Activated CD4-positive, alpha-beta memory T cell treated with anti-CD3 and anti-CD28 coated beads for 36 hours (primary cell): ENCODE measurements at regions of chr2 and their contacts with region 1.

Region 1: DNA sequence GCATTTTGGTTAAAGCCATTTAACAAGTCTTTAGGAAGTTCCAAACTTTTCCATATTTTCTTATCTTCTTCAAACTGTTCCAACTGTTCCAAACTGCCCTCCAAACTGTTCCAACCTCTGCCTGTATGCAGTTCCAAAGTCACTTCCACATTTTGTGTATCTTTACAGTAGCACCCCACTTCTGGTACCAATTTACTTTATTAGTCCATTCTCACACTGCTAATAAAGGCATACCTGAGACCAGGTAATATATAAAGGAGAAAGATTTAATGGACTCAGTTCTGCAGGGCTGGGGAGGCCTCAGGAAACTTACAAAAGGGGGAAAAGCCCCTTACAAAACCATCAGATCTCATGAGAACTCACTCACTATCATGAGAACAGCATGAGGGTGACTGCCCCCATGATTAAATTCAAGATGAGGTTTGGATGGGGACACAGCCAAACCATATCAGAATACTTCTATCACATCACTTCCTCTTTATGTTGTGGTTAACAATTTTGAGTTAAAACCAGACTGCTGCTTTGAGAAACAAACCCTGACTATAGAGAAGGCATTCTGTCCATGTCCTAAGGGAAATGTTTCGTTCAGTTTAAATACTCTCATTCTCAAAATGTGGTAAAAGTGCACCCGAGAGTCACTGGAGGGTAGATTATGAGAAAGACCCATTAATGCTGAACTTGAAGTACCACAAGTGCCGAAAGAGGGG is 11.0 kb downstream of the IL18R1 start:
- DNase-seq: peak; percentile 36
- H3K4me3 Mint-ChIP-seq: peak overlapping the region; percentile 31
- H3K27ac Mint-ChIP-seq: peak overlapping the region; percentile 87
- H3K4me1 Mint-ChIP-seq: peaks cover 68% of the 10 kb centered on the region
- H3K27me3 Mint-ChIP-seq: no peaks in the 10 kb centered on the region

Region 2: GRCh38 chr2:101704046-101704466 is 662.5 kb before region 1 on chr2:
- CTCF ChIA-PET with region 1: no interaction called
- POLR2A ChIA-PET with region 1: no interaction called
- intact Hi-C with region 1: loop called (anchors 10 kb)
- DNase-seq: peak; percentile 59
- H3K4me3 Mint-ChIP-seq: peak overlapping the region; percentile 62
- H3K27ac Mint-ChIP-seq: peak overlapping the region; percentile 87
- H3K4me1 Mint-ChIP-seq: peaks cover 74% of the 10 kb centered on the region
- H3K27me3 Mint-ChIP-seq: no peaks in the 10 kb centered on the region

Region 3: DNA sequence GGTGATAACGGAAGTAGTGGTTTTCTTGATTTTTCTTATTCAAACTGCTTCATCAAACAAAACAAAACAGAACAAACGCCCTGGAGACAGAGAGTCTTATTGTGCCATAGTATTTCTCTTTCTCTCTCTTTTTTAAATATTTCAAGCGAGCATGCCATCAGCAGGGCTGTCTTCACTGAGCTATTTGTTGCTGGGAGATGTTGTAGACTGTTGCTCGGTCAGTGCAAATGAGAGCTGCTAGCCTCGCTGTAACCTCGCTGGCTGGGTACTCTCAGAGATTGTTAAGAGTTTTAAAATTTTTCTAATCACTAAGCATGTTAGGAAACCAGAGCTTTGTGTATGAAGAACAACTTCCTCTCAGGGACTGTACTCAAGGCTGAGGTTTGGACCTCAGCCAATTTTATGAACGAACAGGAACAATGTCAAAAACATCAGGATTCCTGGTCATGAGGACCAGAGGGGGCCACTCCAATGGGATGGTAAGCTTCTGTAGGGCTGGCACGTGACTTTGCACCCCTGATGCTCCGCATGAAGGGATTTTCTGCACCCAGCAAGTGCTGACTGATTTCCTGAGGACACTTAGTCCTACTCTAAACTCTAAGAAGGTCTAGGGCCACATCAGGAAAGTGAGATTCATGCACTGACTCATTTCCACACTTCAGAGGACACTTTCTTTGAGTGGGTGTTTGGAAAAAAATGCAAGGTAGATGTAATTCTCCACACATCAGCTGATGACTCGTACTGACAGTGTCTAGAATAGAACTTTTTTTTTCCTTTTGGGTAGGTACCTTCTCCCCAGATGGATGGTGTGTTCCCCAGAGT is 283.8 kb before region 1 on chr2:
- CTCF ChIA-PET with region 1: no interaction called
- POLR2A ChIA-PET with region 1: no interaction called
- intact Hi-C with region 1: loop called (anchors 1 kb)
- DNase-seq: peak; percentile 80
- H3K4me3 Mint-ChIP-seq: peak overlapping the region; percentile 57
- H3K27ac Mint-ChIP-seq: peak overlapping the region; percentile 92
- H3K4me1 Mint-ChIP-seq: peaks cover 64% of the 10 kb centered on the region
- H3K27me3 Mint-ChIP-seq: no peaks in the 10 kb centered on the region

Region 4: GRCh38 chr2:102251042-102251848 is 115.3 kb before region 1 on chr2:
- CTCF ChIA-PET with region 1: no interaction called
- POLR2A ChIA-PET with region 1: no interaction called
- intact Hi-C with region 1: loop called (anchors 1 kb)
- DNase-seq: peak; percentile 83
- H3K4me3 Mint-ChIP-seq: peak overlapping the region; percentile 66
- H3K27ac Mint-ChIP-seq: peak overlapping the region; percentile 64
- H3K4me1 Mint-ChIP-seq: peaks cover 36% of the 10 kb centered on the region
- H3K27me3 Mint-ChIP-seq: no peaks in the 10 kb centered on the region

Region 5: GRCh38 chr2:102336502-102336945 is 30.0 kb before region 1 on chr2:
- CTCF ChIA-PET with region 1: no interaction called
- POLR2A ChIA-PET with region 1: no interaction called
- intact Hi-C with region 1: loop called (anchors 2 kb)
- DNase-seq: no peak
- H3K4me3 Mint-ChIP-seq: no peak overlapping the region
- H3K27ac Mint-ChIP-seq: no peak overlapping the region
- H3K4me1 Mint-ChIP-seq: peaks cover 7% of the 10 kb centered on the region
- H3K27me3 Mint-ChIP-seq: peaks cover 2% of the 10 kb centered on the region

Region 6: GRCh38 chr2:102436323-102436722 is 69.8 kb after region 1 on chr2:
- CTCF ChIA-PET with region 1: interaction called, 7 read pairs
- POLR2A ChIA-PET with region 1: interaction called, 5 read pairs
- intact Hi-C with region 1: loop called (anchors 1 kb)
- DNase-seq: peak; percentile 54
- H3K4me3 Mint-ChIP-seq: no peak overlapping the region
- H3K27ac Mint-ChIP-seq: peak overlapping the region; percentile 34
- H3K4me1 Mint-ChIP-seq: peaks cover 30% of the 10 kb centered on the region
- H3K27me3 Mint-ChIP-seq: no peaks in the 10 kb centered on the region